Posterior vena cava (tissue), 2 donors: ENCODE measurements at regions of chr16 and their contacts with region 1.

Region 1: DNA sequence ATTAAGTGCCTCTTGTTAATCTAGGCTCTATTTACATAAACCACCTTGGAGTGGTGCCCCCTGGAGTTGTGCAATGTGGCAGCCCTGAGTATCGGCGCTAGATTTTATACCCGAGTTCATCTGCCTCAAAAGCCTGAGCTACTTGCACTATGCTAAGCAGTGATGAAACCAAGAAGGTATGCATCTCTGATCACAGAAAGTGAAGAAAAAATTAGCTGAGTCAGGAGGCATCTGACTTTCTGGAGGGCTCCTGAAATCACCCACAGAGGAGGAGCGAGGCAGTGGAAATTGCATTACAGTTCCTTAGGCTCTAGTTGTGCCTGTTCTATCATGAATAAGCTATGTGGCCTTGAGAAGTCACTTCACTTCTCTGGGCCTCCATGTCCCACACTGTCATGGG is 80.3 kb upstream of the PSMD7 start:
- DNase-seq: no peak

Region 2: GRCh38 chr16:73365016-73365551 is 851.2 kb before region 1 on chr16:
- intact Hi-C with region 1: loop called in 1 of 2 experiments (anchors 5 kb)
- DNase-seq: no peak

Region 3: DNA sequence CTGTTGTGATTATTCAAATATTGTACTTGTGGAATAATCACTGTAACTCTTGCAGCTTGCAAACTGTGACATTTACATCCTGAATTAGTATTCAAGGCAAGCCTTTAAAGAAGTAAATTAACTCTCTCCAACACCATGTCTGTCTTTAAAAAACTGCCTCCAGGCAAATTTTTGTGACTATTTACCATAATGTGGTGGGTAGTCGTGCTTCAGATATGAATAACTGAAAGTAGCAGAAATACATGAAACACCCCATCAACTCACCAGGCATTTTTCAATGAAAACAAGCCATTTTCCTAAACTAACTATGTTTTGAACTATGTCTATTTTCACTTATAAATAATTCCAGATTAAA is 137.1 kb before region 1 on chr16:
- intact Hi-C with region 1: no loop called
- DNase-seq: no peak

Region 4: DNA sequence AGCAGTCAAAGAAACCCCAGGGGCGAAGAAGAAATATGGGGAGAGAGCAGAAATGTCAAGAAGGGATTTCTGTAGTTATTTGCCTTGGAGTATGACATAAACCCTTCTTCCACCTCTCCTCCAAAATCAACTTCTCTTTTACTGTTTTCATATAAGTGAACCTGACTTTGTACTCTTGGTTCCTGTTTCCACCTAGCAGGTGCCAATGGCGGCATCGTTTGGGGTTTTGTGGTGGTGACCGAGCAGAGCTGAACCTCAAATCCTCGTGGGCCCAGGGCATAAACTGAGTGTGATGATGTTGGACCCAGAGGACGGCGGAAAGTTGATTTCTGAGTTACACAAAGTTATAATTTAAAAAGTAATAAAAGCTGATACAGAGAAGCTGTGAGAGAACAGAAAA is 40.7 kb after region 1 on chr16:
- intact Hi-C with region 1: no loop called
- DNase-seq: no peak

Region 5: GRCh38 chr16:74281300-74281699 is 65.0 kb after region 1 on chr16:
- intact Hi-C with region 1: no loop called
- DNase-seq: no peak